Activated naive CD4-positive, alpha-beta T cell treated with anti-CD3 and anti-CD28 coated beads, Interleukin-2, amount 10 ng/mL, durations not matched to agents 7 days and 5 days (primary cell): ENCODE measurements at regions of chr1 and their contacts with region 1.

Region 1: DNA sequence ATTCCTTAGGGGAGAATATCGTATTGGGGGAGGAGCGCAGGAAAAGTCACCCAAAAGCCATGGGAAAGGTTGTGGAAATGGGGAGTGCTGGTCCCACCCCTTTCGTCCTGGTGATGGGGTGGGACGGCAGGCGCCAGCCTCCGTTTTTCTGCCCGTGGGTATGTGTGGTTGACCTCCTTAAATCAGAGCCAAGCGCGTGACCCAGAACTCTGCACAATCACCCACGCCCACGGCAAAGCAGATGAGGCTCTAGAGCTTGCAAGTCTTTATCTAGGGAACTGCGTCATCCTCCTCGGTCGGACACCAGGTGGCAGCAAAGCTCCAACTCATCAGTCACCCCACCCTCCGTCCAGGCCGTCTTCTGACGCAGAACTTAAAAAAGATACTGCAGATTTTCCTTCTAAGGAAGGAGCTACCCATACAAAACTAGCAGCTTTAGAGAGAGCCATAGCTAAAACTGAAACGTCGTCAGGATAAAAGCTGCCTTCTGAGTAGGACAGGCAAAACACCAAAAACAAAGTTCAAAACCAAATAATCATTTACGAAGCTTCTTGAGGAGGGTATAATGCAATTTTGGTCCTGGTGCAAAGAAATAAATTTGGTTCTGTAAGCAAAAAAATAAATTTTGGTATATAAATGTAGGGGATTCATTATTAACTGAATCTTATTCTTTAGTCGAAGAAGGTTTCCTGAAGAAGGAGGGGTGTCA is 62.0 kb downstream of the TBX19 start:
- DNase-seq: peak; percentile 91
- H3K4me3 Mint-ChIP-seq: no peak overlapping the region
- H3K27ac Mint-ChIP-seq: peak overlapping the region; percentile 64
- H3K4me1 Mint-ChIP-seq: peaks cover 27% of the 10 kb centered on the region
- H3K27me3 Mint-ChIP-seq: peaks cover 8% of the 10 kb centered on the region

Region 2: DNA sequence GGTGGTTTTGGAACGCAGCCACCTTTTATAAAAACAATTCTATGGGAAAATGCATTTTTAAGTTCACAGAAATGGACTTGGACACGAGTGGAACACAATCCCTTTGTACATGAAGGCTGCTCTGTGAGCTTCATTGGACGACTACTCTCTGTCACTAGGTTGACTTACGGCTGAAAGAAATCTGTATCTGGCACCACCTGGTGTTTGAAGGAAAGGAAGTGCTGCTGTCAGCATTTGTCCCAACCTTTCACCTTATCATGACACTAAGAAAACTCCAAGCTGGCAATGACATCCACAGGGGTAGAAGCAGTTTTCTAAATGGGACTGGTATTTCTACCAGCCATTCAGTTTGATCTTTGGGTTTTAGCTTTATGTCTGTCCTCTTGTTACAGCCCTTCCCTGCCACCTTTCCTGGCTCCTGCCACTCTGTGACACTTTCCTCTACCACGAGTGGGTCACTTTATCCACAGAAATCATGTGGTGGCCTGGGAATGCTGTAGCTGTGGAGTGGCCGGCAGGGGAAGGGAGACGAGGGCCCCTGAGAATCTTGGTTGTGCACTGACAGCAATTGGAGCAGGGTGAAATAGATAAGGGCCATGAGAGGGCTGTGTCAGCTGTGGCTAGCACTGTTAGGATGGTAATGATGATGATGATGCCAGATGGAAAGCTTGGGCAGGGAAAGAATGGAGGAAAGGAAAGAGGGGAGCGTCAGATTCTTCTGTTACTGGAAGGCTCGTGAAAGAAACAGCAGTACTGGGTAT is 23.2 kb after region 1 on chr1:
- CTCF ChIA-PET with region 1: interaction called, 139 read pairs
- DNase-seq: no peak
- H3K4me3 Mint-ChIP-seq: no peak overlapping the region
- H3K27ac Mint-ChIP-seq: no peak overlapping the region
- H3K4me1 Mint-ChIP-seq: peaks cover 9% of the 10 kb centered on the region
- H3K27me3 Mint-ChIP-seq: peaks cover 41% of the 10 kb centered on the region

Region 3: DNA sequence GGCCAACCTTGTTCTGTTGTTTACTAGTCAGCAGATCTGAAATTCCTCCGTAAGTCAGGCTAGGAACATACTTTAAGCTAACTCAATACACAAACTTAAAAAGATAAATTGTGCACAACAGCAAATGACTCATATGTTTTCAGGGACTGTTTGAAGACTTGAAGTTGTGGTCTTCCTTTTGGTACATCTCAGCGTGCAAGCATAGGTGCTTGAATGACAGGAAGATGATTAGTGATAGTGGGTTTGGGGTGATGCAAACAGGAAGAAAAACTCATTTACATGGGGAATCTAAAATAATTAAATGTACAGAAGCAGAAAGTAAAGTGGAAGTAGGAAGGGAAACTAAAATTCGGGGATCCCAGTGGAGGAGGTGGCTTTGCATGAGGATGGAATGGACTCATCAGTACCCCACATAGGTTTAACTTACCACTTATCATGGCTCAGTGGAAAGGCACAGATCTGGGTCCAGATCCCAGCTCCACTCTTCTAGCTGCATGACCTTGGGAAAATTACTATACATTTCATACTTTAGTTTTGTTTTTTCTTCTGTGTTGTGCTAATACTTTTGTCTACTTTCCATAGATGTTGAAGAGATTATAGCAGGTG is 78.8 kb after region 1 on chr1:
- CTCF ChIA-PET with region 1: interaction called, 21 read pairs
- DNase-seq: no peak
- H3K4me3 Mint-ChIP-seq: no peak overlapping the region
- H3K27ac Mint-ChIP-seq: peak overlapping the region; percentile 77
- H3K4me1 Mint-ChIP-seq: peaks cover 24% of the 10 kb centered on the region
- H3K27me3 Mint-ChIP-seq: peaks cover 3% of the 10 kb centered on the region

Region 4: DNA sequence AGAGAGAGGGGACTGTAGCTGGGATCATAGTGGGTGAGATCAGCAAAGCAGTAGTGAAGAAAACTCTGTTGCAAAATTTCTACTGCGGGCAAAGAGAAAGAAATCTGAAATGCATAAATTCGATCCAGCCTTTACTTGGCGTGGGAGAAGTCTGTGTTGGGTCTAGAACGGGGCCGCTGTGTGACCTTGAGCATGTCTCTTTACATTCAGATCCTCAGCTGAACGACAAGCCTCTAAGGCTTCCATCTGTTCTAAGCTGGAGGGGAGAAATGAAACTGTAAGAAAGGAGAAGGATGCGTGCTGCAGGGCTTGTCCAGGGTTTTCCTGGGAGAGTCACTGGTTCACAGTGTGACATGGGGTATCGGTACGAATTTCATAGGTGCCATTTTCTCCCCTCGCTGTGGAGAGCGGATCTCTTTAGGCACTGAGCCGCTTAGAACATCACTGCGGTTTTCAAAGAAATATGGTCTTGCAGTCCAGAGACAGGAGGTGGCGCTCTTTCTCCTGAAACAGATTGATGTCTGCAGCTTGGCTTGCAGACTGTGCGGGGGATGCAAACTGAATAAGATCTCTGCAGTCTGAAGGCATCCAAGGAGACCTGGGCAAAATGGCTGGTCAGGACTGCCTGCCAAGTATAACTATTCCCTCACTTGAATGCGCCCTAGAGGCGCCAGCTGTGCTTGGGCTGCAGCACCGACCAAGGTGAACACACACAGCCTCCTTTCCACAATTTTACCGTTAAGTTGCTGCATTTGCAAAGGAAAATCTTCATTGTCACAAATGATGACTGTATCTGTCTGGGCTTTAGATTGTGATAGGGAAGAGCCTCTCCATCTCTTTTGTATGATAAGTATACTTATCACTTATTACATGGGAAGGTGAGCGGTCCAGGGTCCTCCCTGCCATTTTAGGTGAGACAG is 97.0 kb after region 1 on chr1:
- CTCF ChIA-PET with region 1: interaction called, 132 read pairs
- DNase-seq: peak; percentile 90
- H3K4me3 Mint-ChIP-seq: peak overlapping the region; percentile 30
- H3K27ac Mint-ChIP-seq: peak overlapping the region; percentile 9
- H3K4me1 Mint-ChIP-seq: peaks cover 58% of the 10 kb centered on the region
- H3K27me3 Mint-ChIP-seq: peaks cover 10% of the 10 kb centered on the region

Region 5: GRCh38 chr1:169133801-169134502 is 791.2 kb after region 1 on chr1:
- CTCF ChIA-PET with region 1: interaction called, 10 read pairs
- DNase-seq: no peak
- H3K4me3 Mint-ChIP-seq: no peak overlapping the region
- H3K27ac Mint-ChIP-seq: no peak overlapping the region
- H3K4me1 Mint-ChIP-seq: peaks cover 5% of the 10 kb centered on the region
- H3K27me3 Mint-ChIP-seq: no peaks in the 10 kb centered on the region